Activated B cell treated with CpG ODN at 0.5 μM for 24 hours (primary cell): ENCODE measurements at regions of chr22 and their contacts with region 1.

Region 1: GRCh38 chr22:41780746-41781505 is 19.6 kb upstream of the CCDC134 start:
- DNase-seq: peak; percentile 60
- ATAC-seq: peak; percentile 96
- H3K4me3 Mint-ChIP-seq: peak overlapping the region; percentile 86
- H3K27ac Mint-ChIP-seq: peak overlapping the region; percentile 93
- H3K4me1 Mint-ChIP-seq: peaks cover 40% of the 10 kb centered on the region
- H3K27me3 Mint-ChIP-seq: no peaks in the 10 kb centered on the region
- CTCF ChIP-seq: no peak

Region 2: GRCh38 chr22:41603873-41604332 is 177.0 kb before region 1 on chr22:
- CTCF ChIA-PET with region 1: no interaction called
- POLR2A ChIA-PET with region 1: no interaction called
- intact Hi-C with region 1: no loop called
- DNase-seq: no peak
- ATAC-seq: peak; percentile 95
- H3K4me3 Mint-ChIP-seq: no peak overlapping the region
- H3K27ac Mint-ChIP-seq: peak overlapping the region; percentile 35
- H3K4me1 Mint-ChIP-seq: peaks cover 7% of the 10 kb centered on the region
- H3K27me3 Mint-ChIP-seq: no peaks in the 10 kb centered on the region
- CTCF ChIP-seq: no peak

Region 3: GRCh38 chr22:41688365-41689211 is 92.3 kb before region 1 on chr22 and contains the start of gene SNU13:
- CTCF ChIA-PET with region 1: no interaction called
- POLR2A ChIA-PET with region 1: interaction called, 23 read pairs
- intact Hi-C with region 1: no loop called
- DNase-seq: peak; percentile 88
- ATAC-seq: peak; percentile 94
- H3K4me3 Mint-ChIP-seq: peak within 1 kb of the TSS; percentile 97
- H3K27ac Mint-ChIP-seq: peak within 1 kb of the TSS; percentile 96
- H3K4me1 Mint-ChIP-seq: peaks cover 28% of the 10 kb centered on the region
- H3K27me3 Mint-ChIP-seq: no peaks in the 10 kb centered on the region
- CTCF ChIP-seq: no peak
- total RNA-seq, gene SNU13: 157 and 165 TPM in 2 replicates

Region 4: GRCh38 chr22:41746567-41747400 is 34.1 kb before region 1 on chr22:
- CTCF ChIA-PET with region 1: interaction called, 17 read pairs
- POLR2A ChIA-PET with region 1: interaction called, 9 read pairs
- intact Hi-C with region 1: loop called (anchors 1 kb)
- DNase-seq: peak; percentile 18
- ATAC-seq: peak; percentile 96
- H3K4me3 Mint-ChIP-seq: peak overlapping the region; percentile 38
- H3K27ac Mint-ChIP-seq: peak overlapping the region; percentile 69
- H3K4me1 Mint-ChIP-seq: peaks cover 31% of the 10 kb centered on the region
- H3K27me3 Mint-ChIP-seq: no peaks in the 10 kb centered on the region
- CTCF ChIP-seq: no peak